A549 (cell line): ENCODE measurements at regions of chr18 and their contacts with region 1.

Region 1: GRCh38 chr18:76398896-76399612 is 96.0 kb downstream of the ZNF516 start:
- DNase-seq: peak; percentile 50 to 77
- ATAC-seq: peak; percentile 84 to 92
- H3K4me3 ChIP-seq: no peak overlapping the region
- H3K27ac ChIP-seq: no peak overlapping the region
- H3K4me1 ChIP-seq: no peaks in the 10 kb centered on the region
- CTCF ChIP-seq: peak; percentile 82
- EP300 ChIP-seq: no peak
- POLR2A ChIP-seq: no peak
- RAD21 ChIP-seq: peak; percentile 87 to 90

Region 2: GRCh38 chr18:76265497-76266235 is 133.4 kb before region 1 on chr18:
- CTCF ChIA-PET with region 1: no interaction called
- POLR2A ChIA-PET with region 1: no interaction called
- DNase-seq: no peak
- ATAC-seq: no peak
- H3K4me3 ChIP-seq: no peak overlapping the region
- H3K27ac ChIP-seq: no peak overlapping the region
- H3K4me1 ChIP-seq: no peaks in the 10 kb centered on the region
- CTCF ChIP-seq: no peak
- EP300 ChIP-seq: no peak
- POLR2A ChIP-seq: no peak
- RAD21 ChIP-seq: no peak

Region 3: GRCh38 chr18:76686737-76687262 is 287.7 kb after region 1 on chr18:
- CTCF ChIA-PET with region 1: interaction called, 92 read pairs
- POLR2A ChIA-PET with region 1: no interaction called
- DNase-seq: peak; percentile 42 to 49
- ATAC-seq: peak; percentile 84 to 94; a peak in 5 of 6 replicates
- H3K4me3 ChIP-seq: no peak overlapping the region
- H3K27ac ChIP-seq: peak overlapping the region in 1 of 2 experiments; percentile 58; a peak in 2 of 6 replicates
- H3K4me1 ChIP-seq: peaks cover 4% of the 10 kb centered on the region; the same call in 1 of the 3 replicates
- CTCF ChIP-seq: peak; percentile 58
- EP300 ChIP-seq: no peak
- POLR2A ChIP-seq: no peak
- RAD21 ChIP-seq: peak; percentile 71 to 73

Region 4: GRCh38 chr18:76697441-76697901 is 298.4 kb after region 1 on chr18:
- CTCF ChIA-PET with region 1: interaction called, 14 read pairs
- POLR2A ChIA-PET with region 1: no interaction called
- DNase-seq: no peak
- ATAC-seq: peak in 1 of 2 experiments; percentile 64; a peak in 3 of 6 replicates
- H3K4me3 ChIP-seq: no peak overlapping the region
- H3K27ac ChIP-seq: no peak overlapping the region
- H3K4me1 ChIP-seq: no peaks in the 10 kb centered on the region
- CTCF ChIP-seq: no peak
- EP300 ChIP-seq: no peak
- POLR2A ChIP-seq: no peak
- RAD21 ChIP-seq: no peak